Activated T-helper 1 cell treated with anti-CD3 and anti-CD28 coated beads, Interleukin-12 subunit alpha, Interleukin-12 subunit beta, Interleukin-2, Interleukin-4 antibody, amounts not matched to agents 30 ng/mL and 10 ng/mL and 1 ng/mL, durations not matched to agents 14 hours and 24 hours and 36 hours (primary cell): ENCODE measurements at regions of chr4 and their contacts with region 1.

Region 1: DNA sequence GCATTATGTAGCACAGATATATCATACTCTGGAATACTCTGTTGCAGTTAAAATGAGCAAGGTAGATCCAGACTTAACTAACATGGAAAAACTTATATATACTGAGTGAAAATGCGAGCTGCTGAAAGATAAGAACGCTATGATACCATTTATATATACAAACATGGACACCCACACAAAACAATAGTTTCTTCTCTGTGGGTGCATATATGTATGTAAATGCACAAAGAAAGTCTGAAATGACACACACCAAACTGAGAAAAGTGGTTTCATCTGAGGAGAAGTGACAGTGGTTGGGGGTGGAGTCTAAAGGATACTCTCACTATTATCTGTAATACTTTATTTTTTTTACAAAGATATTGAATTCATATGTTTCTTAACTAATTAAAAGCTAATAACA is 12.2 kb upstream of the FGF2 start:
- DNase-seq: no peak
- H3K4me3 Mint-ChIP-seq: no peak overlapping the region
- H3K27ac Mint-ChIP-seq: peak overlapping the region; percentile 38
- H3K4me1 Mint-ChIP-seq: peaks cover 12% of the 10 kb centered on the region
- H3K27me3 Mint-ChIP-seq: peaks cover 16% of the 10 kb centered on the region

Region 2: GRCh38 chr4:122658818-122659295 is 155.6 kb before region 1 on chr4:
- intact Hi-C with region 1: loop called (anchors 2 kb)
- DNase-seq: no peak
- H3K4me3 Mint-ChIP-seq: peak overlapping the region; percentile 66
- H3K27ac Mint-ChIP-seq: peak overlapping the region; percentile 94
- H3K4me1 Mint-ChIP-seq: peaks cover 59% of the 10 kb centered on the region
- H3K27me3 Mint-ChIP-seq: no peaks in the 10 kb centered on the region

Region 3: DNA sequence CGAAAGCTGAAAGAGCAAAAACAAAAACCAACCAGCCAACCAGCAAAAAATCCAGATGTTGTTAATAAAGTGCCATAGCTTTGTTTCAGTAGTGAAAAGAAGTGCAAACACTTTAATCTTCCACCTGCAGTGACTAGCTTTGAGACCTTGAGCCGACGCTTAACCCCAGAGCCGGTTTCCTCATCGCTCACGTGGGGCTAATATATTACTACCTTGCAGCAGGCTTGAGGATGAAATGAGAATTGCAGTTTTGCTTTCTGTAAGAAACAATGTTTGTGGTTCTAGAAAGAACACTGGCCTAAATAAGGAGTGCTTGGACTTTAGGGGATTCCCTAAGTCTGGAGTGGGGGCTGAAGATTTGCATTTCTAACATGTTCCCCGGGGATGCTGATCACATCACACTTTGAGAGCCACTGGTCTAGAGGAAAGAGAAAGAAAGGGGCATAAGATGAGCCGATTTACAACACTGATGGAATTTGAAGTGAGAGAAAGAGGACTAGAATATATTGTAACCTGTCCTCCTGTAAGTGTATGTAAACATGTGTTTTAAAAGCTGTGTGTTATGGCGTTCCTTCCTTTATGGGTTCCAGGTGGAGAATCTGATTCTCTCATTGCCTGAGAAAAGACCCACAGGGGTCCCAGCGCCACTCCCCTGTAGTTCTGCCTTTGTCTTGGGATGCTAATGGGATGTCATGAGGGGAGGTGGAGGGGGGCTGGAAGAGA is 13.6 kb after region 1 on chr4:
- intact Hi-C with region 1: loop called (anchors 1 kb)
- DNase-seq: peak; percentile 40
- H3K4me3 Mint-ChIP-seq: peak overlapping the region; percentile 78
- H3K27ac Mint-ChIP-seq: peak overlapping the region; percentile 64
- H3K4me1 Mint-ChIP-seq: peaks cover 34% of the 10 kb centered on the region
- H3K27me3 Mint-ChIP-seq: peaks cover 39% of the 10 kb centered on the region

Region 4: GRCh38 chr4:122854447-122855352 is 40.3 kb after region 1 on chr4:
- intact Hi-C with region 1: no loop called
- DNase-seq: no peak
- H3K4me3 Mint-ChIP-seq: no peak overlapping the region
- H3K27ac Mint-ChIP-seq: no peak overlapping the region
- H3K4me1 Mint-ChIP-seq: no peaks in the 10 kb centered on the region
- H3K27me3 Mint-ChIP-seq: peaks cover 27% of the 10 kb centered on the region

Region 5: DNA sequence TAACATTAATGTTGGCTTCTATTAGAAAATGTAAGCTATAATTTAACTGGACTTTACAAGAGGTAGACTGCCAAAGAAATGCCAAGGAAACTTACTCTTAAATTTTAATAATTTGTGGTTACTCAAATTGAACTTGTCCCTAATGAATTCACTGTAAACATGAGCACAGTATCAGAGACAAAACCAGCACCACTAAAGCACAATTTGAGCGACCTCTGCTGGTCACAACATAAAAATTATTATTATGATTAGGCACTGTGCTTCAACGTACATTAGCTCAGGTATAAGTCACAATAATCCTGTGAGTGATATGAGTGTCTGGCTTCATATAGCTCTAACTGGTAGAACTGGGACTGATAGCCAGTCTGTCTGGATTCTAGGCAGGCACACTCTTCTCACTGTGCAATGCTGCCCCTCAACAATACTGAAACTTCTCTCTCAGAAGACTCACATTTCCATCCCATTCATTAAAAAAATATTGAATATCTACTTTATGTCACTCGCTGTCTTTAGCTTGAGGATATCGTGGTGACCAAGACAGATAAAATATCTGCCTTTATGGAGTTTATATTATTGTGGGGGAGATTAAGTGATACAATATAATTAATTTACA is 100.0 kb after region 1 on chr4:
- intact Hi-C with region 1: no loop called
- DNase-seq: no peak
- H3K4me3 Mint-ChIP-seq: no peak overlapping the region
- H3K27ac Mint-ChIP-seq: no peak overlapping the region
- H3K4me1 Mint-ChIP-seq: peaks cover 10% of the 10 kb centered on the region
- H3K27me3 Mint-ChIP-seq: no peaks in the 10 kb centered on the region

Region 6: GRCh38 chr4:123930996-123931395 is 1116.6 kb after region 1 on chr4:
- intact Hi-C with region 1: no loop called
- DNase-seq: no peak
- H3K4me3 Mint-ChIP-seq: no peak overlapping the region
- H3K27ac Mint-ChIP-seq: no peak overlapping the region
- H3K4me1 Mint-ChIP-seq: no peaks in the 10 kb centered on the region
- H3K27me3 Mint-ChIP-seq: no peaks in the 10 kb centered on the region